ENCODE measurements at regions of chr3 and their contacts with region 1.

Region 1: DNA sequence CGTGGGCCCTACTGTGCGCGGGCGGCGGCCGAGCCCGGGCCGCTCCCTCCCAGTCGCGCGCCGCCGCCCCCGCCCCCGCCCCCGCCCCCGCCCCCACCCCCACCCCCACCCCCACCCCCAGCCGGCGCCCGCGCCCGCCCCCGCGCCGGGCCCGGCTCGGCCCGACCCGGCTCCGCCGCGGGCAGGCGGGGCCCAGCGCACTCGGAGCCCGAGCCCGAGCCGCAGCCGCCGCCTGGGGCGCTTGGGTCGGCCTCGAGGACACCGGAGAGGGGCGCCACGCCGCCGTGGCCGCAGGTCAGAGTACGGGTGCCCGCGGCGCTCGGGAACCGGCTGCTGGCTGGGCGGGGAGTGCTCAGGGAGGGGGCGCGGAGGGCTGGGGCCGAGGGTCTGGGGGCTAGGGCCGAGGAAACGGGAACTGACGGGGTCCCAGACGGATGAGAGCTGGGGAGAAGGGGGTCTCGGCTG is 1.1 kb upstream of the PPARG start:
- H3K4me3 Mint-ChIP-seq: peak overlapping the region; percentile 84
- H3K27ac Mint-ChIP-seq: peak overlapping the region; percentile 89
- H3K4me1 Mint-ChIP-seq: peaks cover 32% of the 10 kb centered on the region
- H3K27me3 Mint-ChIP-seq: peaks cover 12% of the 10 kb centered on the region

Region 2: GRCh38 chr3:12135029-12135657 is 152.6 kb before region 1 on chr3:
- intact Hi-C with region 1: loop called (anchors 10 kb)
- H3K4me3 Mint-ChIP-seq: no peak overlapping the region
- H3K27ac Mint-ChIP-seq: no peak overlapping the region
- H3K4me1 Mint-ChIP-seq: peaks cover 12% of the 10 kb centered on the region
- H3K27me3 Mint-ChIP-seq: peaks cover 21% of the 10 kb centered on the region

Region 3: GRCh38 chr3:12193485-12194165 is 94.1 kb before region 1 on chr3:
- intact Hi-C with region 1: loop called (anchors 5 kb)
- H3K4me3 Mint-ChIP-seq: no peak overlapping the region
- H3K27ac Mint-ChIP-seq: peak overlapping the region; percentile 95
- H3K4me1 Mint-ChIP-seq: peaks cover 72% of the 10 kb centered on the region
- H3K27me3 Mint-ChIP-seq: peaks cover 2% of the 10 kb centered on the region

Region 4: DNA sequence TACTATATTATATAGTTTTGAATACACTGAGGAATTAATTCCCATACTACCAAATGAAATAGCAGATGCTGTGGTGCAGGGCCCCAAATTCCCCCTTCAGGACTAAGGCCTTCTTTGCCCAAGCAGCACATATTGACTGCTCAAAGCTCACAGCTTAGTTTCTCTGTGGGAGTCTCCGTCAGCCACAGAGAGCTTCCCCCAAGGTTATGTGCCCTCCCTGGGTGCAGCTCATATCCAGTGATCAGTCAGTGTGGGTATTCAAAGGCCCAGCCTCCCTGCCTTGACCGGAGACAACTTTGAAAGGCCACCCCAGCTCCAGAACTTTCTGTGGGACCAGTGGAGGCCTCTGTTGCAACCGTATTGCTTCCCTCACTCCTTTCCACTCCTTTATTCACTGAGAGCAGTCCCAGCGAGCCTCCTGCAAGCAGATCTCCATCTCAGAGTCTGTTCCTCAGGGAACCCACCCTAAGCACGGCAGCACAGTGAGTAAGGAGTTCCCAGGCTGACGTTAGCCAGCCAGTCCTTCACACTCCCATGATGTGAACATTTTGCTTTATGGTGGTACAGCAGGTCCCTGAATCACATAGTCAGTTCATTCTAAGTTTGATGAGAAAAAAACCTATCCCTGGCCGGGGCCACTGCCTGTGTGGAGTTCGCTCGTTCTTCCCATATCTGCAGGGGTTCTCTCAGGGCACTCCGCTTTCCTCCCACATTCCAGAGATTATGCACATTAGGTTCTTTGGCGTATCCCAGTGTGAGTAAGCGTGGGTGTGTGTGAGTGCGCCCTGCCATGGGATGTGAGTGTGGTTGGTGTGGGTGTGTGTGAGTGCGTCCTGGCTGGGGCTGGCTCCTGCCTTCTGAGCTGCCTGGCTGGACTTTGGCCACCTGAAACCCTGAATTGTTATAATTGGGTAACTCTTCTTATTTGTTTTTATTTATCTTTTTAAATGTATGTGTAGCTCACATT is 63.3 kb before region 1 on chr3:
- intact Hi-C with region 1: loop called (anchors 10 kb)
- H3K4me3 Mint-ChIP-seq: no peak overlapping the region
- H3K27ac Mint-ChIP-seq: no peak overlapping the region
- H3K4me1 Mint-ChIP-seq: peaks cover 47% of the 10 kb centered on the region
- H3K27me3 Mint-ChIP-seq: peaks cover 25% of the 10 kb centered on the region

Region 5: GRCh38 chr3:12484198-12484974 is 196.6 kb after region 1 on chr3 and contains the start of gene TSEN2:
- intact Hi-C with region 1: loop called (anchors 5 kb)
- H3K4me3 Mint-ChIP-seq: peak within 1 kb of the TSS; percentile 98
- H3K27ac Mint-ChIP-seq: peak within 1 kb of the TSS; percentile 91
- H3K4me1 Mint-ChIP-seq: peaks cover 66% of the 10 kb centered on the region
- H3K27me3 Mint-ChIP-seq: no peaks in the 10 kb centered on the region

Measured in dendritic cell treated with granulocyte-macrophage colony-stimulating factor and Interleukin-4, amounts not matched to agents 40 ng/mL and 50 ng/mL, for 4 days (primary cell).